ENCODE measurements at regions of chr1 and their contacts with region 1.

Region 1: GRCh38 chr1:94335950-94336349 is 82.2 kb upstream of the ABCD3 start:
- DNase-seq: peak; percentile 67
- H3K4me3 Mint-ChIP-seq: no peak overlapping the region
- H3K27ac Mint-ChIP-seq: no peak overlapping the region
- H3K4me1 Mint-ChIP-seq: no peaks in the 10 kb centered on the region
- H3K27me3 Mint-ChIP-seq: peaks cover 4% of the 10 kb centered on the region

Region 2: DNA sequence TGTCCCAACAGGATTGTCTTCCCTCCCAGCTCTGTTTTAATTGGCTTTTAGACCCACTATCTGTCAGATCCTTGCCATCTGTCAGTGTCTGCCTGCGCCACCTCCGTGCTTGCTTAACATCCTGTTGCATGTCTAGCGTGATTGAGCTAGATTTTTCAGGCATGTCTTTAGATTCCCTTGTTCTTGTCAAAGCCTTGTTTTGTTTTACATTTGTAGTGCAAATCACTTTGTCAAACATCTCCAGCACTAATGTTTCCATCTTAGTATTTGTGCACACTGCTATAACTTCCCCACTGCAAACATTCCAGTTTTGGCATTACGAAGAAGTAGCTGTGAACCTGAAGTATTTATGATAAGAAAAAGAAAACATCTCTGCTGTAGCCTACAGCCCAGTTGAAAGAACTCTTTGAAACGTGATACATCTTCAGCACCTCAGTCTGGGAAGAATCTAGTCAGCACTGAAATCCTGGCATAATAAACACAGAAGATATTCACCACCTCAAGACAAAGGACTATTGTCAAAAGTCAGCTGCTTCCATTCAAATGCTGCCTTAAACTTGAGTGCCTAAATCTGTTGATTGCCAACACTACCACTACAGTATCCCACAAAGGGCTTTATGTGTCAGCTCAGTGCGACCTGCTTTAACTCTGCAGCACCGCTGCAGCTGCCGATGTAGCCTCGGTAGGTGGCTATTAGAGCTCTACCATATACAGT is 783.1 kb before region 1 on chr1:
- CTCF ChIA-PET with region 1: no interaction called
- intact Hi-C with region 1: no loop called
- DNase-seq: peak; percentile 11
- H3K4me3 Mint-ChIP-seq: no peak overlapping the region
- H3K27ac Mint-ChIP-seq: no peak overlapping the region
- H3K4me1 Mint-ChIP-seq: peaks cover 7% of the 10 kb centered on the region
- H3K27me3 Mint-ChIP-seq: peaks cover 8% of the 10 kb centered on the region

Region 3: GRCh38 chr1:94025383-94026340 is 310.3 kb before region 1 on chr1:
- CTCF ChIA-PET with region 1: interaction called, 6 read pairs
- intact Hi-C with region 1: loop called (anchors 1 kb)
- DNase-seq: peak; percentile 51
- H3K4me3 Mint-ChIP-seq: no peak overlapping the region
- H3K27ac Mint-ChIP-seq: no peak overlapping the region
- H3K4me1 Mint-ChIP-seq: peaks cover 3% of the 10 kb centered on the region
- H3K27me3 Mint-ChIP-seq: no peaks in the 10 kb centered on the region

Region 4: DNA sequence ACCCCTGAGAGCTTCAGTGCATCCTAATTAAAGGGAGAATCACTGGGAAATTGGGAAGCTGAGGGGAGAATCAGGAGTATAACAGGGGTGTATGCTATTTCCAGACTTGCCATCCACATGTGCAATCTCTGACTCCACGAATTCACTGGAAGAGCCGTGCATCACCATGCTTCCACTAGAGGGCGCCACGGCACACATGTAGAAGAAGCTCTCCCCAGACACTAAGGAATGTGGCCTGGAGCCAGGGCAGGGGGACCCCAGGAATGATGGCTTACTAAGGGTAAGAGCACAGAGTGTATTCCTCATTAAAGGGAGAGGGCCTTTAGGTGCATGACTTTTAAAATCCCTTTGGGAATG is 296.5 kb before region 1 on chr1:
- CTCF ChIA-PET with region 1: interaction called, 47 read pairs
- intact Hi-C with region 1: loop called (anchors 1 kb)
- DNase-seq: peak; percentile 74
- H3K4me3 Mint-ChIP-seq: no peak overlapping the region
- H3K27ac Mint-ChIP-seq: no peak overlapping the region
- H3K4me1 Mint-ChIP-seq: peaks cover 15% of the 10 kb centered on the region
- H3K27me3 Mint-ChIP-seq: peaks cover 26% of the 10 kb centered on the region

Region 5: GRCh38 chr1:94045465-94046056 is 290.4 kb before region 1 on chr1:
- CTCF ChIA-PET with region 1: interaction called, 47 read pairs
- intact Hi-C with region 1: loop called (anchors 1 kb)
- DNase-seq: peak; percentile 65
- H3K4me3 Mint-ChIP-seq: peak overlapping the region; percentile 37
- H3K27ac Mint-ChIP-seq: no peak overlapping the region
- H3K4me1 Mint-ChIP-seq: no peaks in the 10 kb centered on the region
- H3K27me3 Mint-ChIP-seq: peaks cover 14% of the 10 kb centered on the region

Region 6: DNA sequence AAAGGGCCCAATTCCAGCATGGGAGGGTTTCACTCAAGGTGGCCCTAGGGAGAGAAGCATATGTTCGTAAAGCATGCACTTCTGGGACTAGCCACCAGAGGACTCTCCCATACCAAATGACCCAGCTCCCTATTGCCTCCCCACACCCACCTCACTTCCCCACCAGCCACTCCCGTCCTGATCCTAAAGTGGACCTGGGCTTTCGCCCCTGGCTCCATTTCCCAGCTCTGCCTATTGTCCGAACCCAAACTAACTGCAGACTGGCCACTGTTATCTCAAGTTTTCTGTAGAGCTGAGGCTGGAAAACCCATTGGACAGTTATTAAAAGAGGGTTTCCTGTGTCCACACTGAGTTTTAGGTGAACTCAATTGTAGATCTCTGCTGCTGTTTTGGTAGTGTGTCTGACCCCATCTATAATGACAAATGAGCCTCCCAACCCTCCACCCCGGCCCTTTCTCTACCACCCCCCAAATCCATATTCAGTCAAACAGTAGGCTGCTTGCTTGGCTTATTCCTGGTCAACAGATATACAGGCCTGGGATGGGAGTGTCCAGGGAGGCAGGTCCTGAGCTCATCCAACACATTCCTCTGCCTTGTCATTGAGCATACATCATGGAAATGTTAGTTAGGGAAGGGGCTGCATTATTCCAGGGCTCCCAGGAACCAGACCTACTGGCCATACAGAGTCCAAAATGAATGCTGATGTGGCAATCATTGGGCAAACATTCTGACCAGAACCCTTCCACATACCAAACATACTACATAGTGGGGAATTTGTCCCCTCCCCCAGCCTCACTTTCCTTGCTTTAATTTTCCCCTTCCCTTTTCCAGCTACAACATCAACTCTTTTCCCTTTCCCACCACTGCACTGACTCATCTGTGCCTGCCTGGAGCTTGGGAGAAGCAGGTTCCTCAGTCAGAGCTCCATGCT is 274.2 kb before region 1 on chr1:
- CTCF ChIA-PET with region 1: interaction called, 18 read pairs
- intact Hi-C with region 1: loop called (anchors 1 kb)
- DNase-seq: peak; percentile 60
- H3K4me3 Mint-ChIP-seq: no peak overlapping the region
- H3K27ac Mint-ChIP-seq: no peak overlapping the region
- H3K4me1 Mint-ChIP-seq: no peaks in the 10 kb centered on the region
- H3K27me3 Mint-ChIP-seq: peaks cover 7% of the 10 kb centered on the region

Region 7: DNA sequence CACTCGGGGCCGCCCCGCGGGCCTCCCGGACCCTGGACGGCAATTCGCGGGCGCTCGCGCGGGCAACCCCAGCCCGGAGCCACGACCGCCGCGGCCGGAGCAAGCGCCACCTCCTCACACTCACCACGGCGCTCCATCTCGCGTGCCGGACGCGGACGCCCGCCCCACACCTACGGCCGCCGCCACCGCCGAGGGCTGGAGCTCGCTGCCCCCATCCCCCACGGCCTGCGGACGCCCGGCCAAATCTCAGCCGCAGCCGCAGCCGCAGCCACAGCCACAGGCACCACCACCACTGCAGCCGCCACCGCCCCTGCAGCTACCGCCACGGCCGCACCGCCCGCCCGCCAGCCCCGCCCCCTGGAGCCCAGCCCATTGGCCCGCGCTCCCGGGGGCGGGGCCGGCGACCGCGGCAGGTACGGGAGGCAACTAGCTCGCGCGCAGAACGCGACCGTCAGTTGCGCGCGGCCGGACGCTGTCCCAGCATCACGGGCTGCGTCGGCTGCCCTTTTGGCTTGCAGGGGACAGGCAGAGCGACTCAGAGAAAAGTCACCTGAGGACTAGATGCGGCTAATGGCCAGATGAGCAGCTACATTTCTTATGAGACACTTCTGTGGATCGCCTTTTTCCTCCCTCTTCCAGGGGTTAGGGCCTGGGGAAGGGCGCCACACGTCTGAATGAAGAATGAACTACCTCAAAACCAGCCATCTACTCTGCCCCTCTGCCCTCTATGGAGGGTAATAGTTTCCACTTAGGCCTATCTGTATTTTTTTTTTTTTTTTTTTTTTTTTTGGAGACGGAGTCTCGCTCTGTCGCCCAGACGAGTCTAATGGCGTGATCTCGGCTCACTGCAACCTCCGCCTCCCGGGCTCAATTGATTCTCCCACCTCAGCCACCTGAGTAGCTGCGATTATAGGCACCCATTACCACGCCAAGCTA is 98.4 kb before region 1 on chr1 and contains the start of gene ARHGAP29:
- CTCF ChIA-PET with region 1: interaction called, 6 read pairs
- intact Hi-C with region 1: loop called (anchors 5 kb)
- DNase-seq: peak; percentile 67
- H3K4me3 Mint-ChIP-seq: peak within 1 kb of the TSS; percentile 68
- H3K27ac Mint-ChIP-seq: no peak within 1 kb of the TSS
- H3K4me1 Mint-ChIP-seq: peaks cover 7% of the 10 kb centered on the region
- H3K27me3 Mint-ChIP-seq: peaks cover 64% of the 10 kb centered on the region
- total RNA-seq, gene ARHGAP29: 0.37 to 0.48 TPM

Region 8: GRCh38 chr1:94463765-94464330 is 127.9 kb after region 1 on chr1:
- CTCF ChIA-PET with region 1: interaction called, 11 read pairs
- intact Hi-C with region 1: loop called (anchors 1 kb)
- DNase-seq: peak; percentile 33
- H3K4me3 Mint-ChIP-seq: no peak overlapping the region
- H3K27ac Mint-ChIP-seq: peak overlapping the region; percentile 8
- H3K4me1 Mint-ChIP-seq: peaks cover 2% of the 10 kb centered on the region
- H3K27me3 Mint-ChIP-seq: no peaks in the 10 kb centered on the region

Measured in activated naive CD4-positive, alpha-beta T cell treated with anti-CD3 and anti-CD28 coated beads for 36 hours (primary cell).